ENCODE measurements at regions of chr19 and their contacts with region 1.

Region 1: GRCh38 chr19:45478454-45479238 is 10.8 kb downstream of the FOSB start:
- DNase-seq: peak; percentile 90
- ATAC-seq: peak; percentile 94
- H3K4me3 Mint-ChIP-seq: peak overlapping the region; percentile 69
- H3K27ac Mint-ChIP-seq: peak overlapping the region; percentile 99
- H3K4me1 Mint-ChIP-seq: peaks cover 23% of the 10 kb centered on the region
- H3K27me3 Mint-ChIP-seq: peaks cover 47% of the 10 kb centered on the region
- CTCF ChIP-seq: peak; percentile 90

Region 2: DNA sequence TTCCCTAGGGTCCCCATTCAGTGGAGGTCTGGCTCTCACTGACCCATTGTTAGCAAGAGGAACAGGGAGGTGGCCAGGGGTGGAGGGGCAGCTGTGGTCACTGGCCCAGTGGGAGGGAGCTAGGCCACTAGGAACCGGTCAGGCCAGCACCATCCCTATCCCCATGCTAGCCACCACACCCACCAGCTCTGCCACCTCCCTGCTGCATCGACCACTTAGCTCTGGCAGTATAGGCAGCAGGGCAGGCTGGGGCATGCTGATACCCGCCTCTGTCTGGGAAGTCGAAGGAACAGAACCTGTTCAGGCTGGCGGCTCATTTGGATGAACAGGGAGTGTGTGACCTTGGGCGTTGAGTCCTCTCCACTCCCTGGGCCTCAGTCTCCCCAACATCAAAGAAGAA is 78.5 kb before region 1 on chr19:
- CTCF ChIA-PET with region 1: interaction called, 37 read pairs
- POLR2A ChIA-PET with region 1: no interaction called
- DNase-seq: no peak
- ATAC-seq: no peak
- H3K4me3 Mint-ChIP-seq: no peak overlapping the region
- H3K27ac Mint-ChIP-seq: no peak overlapping the region
- H3K4me1 Mint-ChIP-seq: peaks cover 32% of the 10 kb centered on the region
- H3K27me3 Mint-ChIP-seq: peaks cover 42% of the 10 kb centered on the region
- CTCF ChIP-seq: no peak

Region 3: GRCh38 chr19:45405435-45406225 is 73.0 kb before region 1 on chr19:
- CTCF ChIA-PET with region 1: interaction called, 37 read pairs
- POLR2A ChIA-PET with region 1: no interaction called
- DNase-seq: peak; percentile 93
- ATAC-seq: peak; percentile 32
- H3K4me3 Mint-ChIP-seq: peak overlapping the region; percentile 96
- H3K27ac Mint-ChIP-seq: peak overlapping the region; percentile 99
- H3K4me1 Mint-ChIP-seq: peaks cover 23% of the 10 kb centered on the region
- H3K27me3 Mint-ChIP-seq: peaks cover 7% of the 10 kb centered on the region; the same call in 1 of the 2 replicates
- CTCF ChIP-seq: no peak

Region 4: DNA sequence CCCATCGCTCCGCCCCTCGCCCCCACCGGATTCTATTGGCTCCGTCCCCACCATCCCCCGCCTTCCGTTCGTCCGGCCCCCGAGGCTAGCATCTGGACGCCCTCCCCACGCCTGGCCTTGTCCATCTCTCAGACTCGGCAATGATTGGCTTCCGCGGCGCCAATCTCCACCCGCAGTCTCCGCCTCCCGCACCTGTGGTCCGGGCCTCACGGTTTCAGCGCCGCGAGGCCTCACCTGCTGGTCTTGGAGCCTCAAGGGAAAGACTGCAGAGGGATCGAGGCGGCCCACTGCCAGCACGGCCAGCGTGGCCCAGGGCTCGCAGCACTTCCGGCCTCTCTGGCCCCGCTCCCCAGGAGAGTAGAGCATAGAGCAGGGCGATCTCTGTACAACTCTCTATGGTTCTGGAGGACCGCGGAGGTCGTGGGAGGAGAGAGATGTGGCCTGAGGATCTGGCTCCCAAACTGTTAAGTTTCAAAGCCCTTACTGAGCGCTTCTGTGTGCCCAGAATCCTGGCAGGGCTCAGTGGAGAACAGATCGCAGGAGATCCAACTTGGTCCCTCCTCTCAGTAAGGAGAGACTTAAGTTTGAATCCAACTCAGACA is 55.0 kb before region 1 on chr19 and contains the start of gene ERCC1:
- CTCF ChIA-PET with region 1: interaction called, 80 read pairs
- POLR2A ChIA-PET with region 1: interaction called, 15 read pairs
- DNase-seq: peak; percentile 100
- ATAC-seq: peak; percentile 90
- H3K4me3 Mint-ChIP-seq: peak within 1 kb of the TSS; percentile 93
- H3K27ac Mint-ChIP-seq: peak within 1 kb of the TSS; percentile 99
- H3K4me1 Mint-ChIP-seq: peaks cover 21% of the 10 kb centered on the region
- H3K27me3 Mint-ChIP-seq: no peaks in the 10 kb centered on the region
- CTCF ChIP-seq: no peak
- total RNA-seq, gene ERCC1: 43.7 to 60.6 TPM (median 60.1 TPM) in 3 replicates

Region 5: DNA sequence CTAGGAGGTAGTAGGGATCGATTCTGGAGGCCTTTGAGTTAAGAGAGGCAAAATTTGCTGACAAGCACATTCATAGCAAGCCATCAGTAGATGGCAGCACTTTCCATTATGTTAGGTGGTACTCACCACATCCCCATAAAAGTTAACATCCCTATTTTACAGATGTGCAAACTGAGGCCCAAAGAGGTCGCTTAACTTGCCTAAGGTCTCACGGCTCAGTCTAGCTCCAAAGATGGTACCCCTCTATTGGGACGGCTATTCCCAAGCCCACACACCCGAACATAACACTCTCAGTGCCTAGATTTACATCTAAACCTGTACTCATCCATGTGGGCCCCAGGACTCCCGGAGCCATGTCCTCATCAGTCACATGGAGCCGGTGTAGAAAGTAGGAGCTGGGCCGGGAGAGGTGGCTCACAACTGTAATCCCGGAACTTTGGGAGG is 32.3 kb before region 1 on chr19:
- CTCF ChIA-PET with region 1: interaction called, 325 read pairs
- POLR2A ChIA-PET with region 1: interaction called, 28 read pairs
- DNase-seq: no peak
- ATAC-seq: no peak
- H3K4me3 Mint-ChIP-seq: no peak overlapping the region
- H3K27ac Mint-ChIP-seq: no peak overlapping the region
- H3K4me1 Mint-ChIP-seq: peaks cover 33% of the 10 kb centered on the region
- H3K27me3 Mint-ChIP-seq: peaks cover 63% of the 10 kb centered on the region
- CTCF ChIP-seq: no peak

Region 6: GRCh38 chr19:45455707-45456499 is 22.7 kb before region 1 on chr19:
- CTCF ChIA-PET with region 1: interaction called, 19 read pairs
- POLR2A ChIA-PET with region 1: no interaction called
- DNase-seq: peak; percentile 78
- ATAC-seq: peak; percentile 93
- H3K4me3 Mint-ChIP-seq: no peak overlapping the region
- H3K27ac Mint-ChIP-seq: peak overlapping the region; percentile 78
- H3K4me1 Mint-ChIP-seq: peaks cover 14% of the 10 kb centered on the region
- H3K27me3 Mint-ChIP-seq: peaks cover 37% of the 10 kb centered on the region
- CTCF ChIP-seq: no peak

Region 7: DNA sequence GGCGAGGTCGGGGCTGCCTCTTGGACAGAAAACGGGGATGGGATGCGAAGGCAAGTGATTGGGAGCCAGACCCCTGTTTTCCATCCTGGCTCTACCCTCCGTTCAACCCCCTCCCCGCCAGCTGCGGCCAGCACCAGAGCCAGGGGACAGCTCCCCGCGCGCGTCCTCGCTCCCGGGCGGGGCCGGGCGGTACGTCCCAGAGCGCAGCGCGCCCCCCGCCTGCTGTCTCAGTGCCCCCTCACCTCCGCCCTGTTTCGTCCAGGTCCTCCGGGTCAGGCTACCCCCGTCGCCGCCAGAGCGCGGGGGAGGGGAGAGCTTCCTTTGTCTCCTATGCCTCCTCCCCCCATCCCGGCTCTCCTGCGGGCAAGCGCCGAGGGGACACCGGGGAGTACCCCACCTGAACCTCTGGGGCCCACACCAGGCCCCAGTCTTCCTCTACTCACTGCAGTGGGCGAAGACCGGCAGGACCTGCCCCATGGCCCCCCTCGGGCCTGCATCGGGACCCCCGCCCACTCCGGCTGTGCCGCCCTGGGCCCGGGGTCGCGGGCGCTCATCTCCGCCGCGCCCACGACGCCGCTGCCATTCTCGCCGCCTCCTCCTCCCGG is 17.8 kb after region 1 on chr19:
- CTCF ChIA-PET with region 1: interaction called, 47 read pairs
- POLR2A ChIA-PET with region 1: interaction called, 4 read pairs
- DNase-seq: peak; percentile 84
- ATAC-seq: peak; percentile 1
- H3K4me3 Mint-ChIP-seq: peak overlapping the region; percentile 63
- H3K27ac Mint-ChIP-seq: no peak overlapping the region
- H3K4me1 Mint-ChIP-seq: peaks cover 43% of the 10 kb centered on the region
- H3K27me3 Mint-ChIP-seq: peaks cover 39% of the 10 kb centered on the region
- CTCF ChIP-seq: no peak

Region 8: GRCh38 chr19:45542234-45542668 is 63.6 kb after region 1 on chr19:
- CTCF ChIA-PET with region 1: no interaction called
- POLR2A ChIA-PET with region 1: no interaction called
- DNase-seq: no peak
- ATAC-seq: no peak
- H3K4me3 Mint-ChIP-seq: no peak overlapping the region
- H3K27ac Mint-ChIP-seq: no peak overlapping the region
- H3K4me1 Mint-ChIP-seq: peaks cover 3% of the 10 kb centered on the region; the same call in 1 of the 2 replicates
- H3K27me3 Mint-ChIP-seq: peaks cover 7% of the 10 kb centered on the region
- CTCF ChIP-seq: no peak